ENCODE measurements at regions of chr7 and their contacts with region 1.

Region 1: GRCh38 chr7:76314042-76314721 is 11.7 kb downstream of the HSPB1 start:
- DNase-seq: peak; percentile 98
- ATAC-seq: peak; percentile 74

Region 2: DNA sequence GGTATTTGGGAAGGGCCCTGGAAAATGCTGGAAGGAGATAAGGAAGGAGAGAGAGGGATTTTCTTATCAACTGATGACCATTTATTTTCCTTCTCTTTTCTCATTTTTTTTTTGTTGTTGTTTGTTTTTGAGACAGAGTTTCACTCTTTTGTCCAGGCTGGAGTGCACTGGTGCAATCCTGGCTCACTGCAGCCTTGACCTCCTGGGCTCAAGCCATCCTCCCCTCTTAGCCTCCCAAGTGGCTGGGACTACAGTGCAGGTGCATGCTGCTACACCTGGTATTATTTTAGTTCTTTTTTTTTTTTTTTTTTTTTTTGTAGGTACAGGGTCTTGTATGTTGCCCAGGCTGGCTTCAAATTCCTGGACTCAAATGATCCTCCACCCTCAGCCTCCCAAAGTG is 627.6 kb before region 1 on chr7:
- intact Hi-C with region 1: no loop called
- DNase-seq: no peak
- ATAC-seq: no peak

Region 3: GRCh38 chr7:76179686-76180085 is 134.5 kb before region 1 on chr7:
- intact Hi-C with region 1: loop called (anchors 2 kb)
- DNase-seq: no peak
- ATAC-seq: no peak

Region 4: GRCh38 chr7:76220185-76221057 is 93.8 kb before region 1 on chr7:
- intact Hi-C with region 1: no loop called
- DNase-seq: no peak
- ATAC-seq: no peak

Region 5: GRCh38 chr7:76291343-76292212 is 22.6 kb before region 1 on chr7:
- intact Hi-C with region 1: loop called (anchors 1 kb)
- DNase-seq: peak; percentile 94
- ATAC-seq: peak; percentile 74

Region 6: GRCh38 chr7:76359111-76359978 is 45.2 kb after region 1 on chr7:
- intact Hi-C with region 1: loop called (anchors 2 kb)
- DNase-seq: peak; percentile 98
- ATAC-seq: peak; percentile 94